Naive thymus-derived CD4-positive, alpha-beta T cell (primary cell): ENCODE measurements at regions of chr12 and their contacts with region 1.

Region 1: GRCh38 chr12:109880016-109880931 is at the start of gene GLTP:
- DNase-seq: peak; percentile 82 to 96 (median 94)
- ATAC-seq: peak; percentile 98
- H3K4me3 ChIP-seq: peak within 1 kb of the TSS; percentile 92
- H3K4me3 Mint-ChIP-seq: peak within 1 kb of the TSS; percentile 84 to 97 (median 94)
- H3K27ac ChIP-seq: peak within 1 kb of the TSS; percentile 88
- H3K27ac Mint-ChIP-seq: peak within 1 kb of the TSS; percentile 77 to 97 (median 90)
- H3K4me1 ChIP-seq: peaks cover 24 to 25% of the 10 kb centered on the region in 2 donors
- H3K4me1 Mint-ChIP-seq: peaks cover 27 to 54% (median 50%) of the 10 kb centered on the region in 7 donors
- H3K27me3 ChIP-seq: no peaks in the 10 kb centered on the region
- H3K27me3 Mint-ChIP-seq: peaks cover 0 to 15% (median 0%) of the 10 kb centered on the region in 5 donors
- total RNA-seq, gene GLTP: 19.2 to 36.2 (median 22.1) TPM

Region 2: DNA sequence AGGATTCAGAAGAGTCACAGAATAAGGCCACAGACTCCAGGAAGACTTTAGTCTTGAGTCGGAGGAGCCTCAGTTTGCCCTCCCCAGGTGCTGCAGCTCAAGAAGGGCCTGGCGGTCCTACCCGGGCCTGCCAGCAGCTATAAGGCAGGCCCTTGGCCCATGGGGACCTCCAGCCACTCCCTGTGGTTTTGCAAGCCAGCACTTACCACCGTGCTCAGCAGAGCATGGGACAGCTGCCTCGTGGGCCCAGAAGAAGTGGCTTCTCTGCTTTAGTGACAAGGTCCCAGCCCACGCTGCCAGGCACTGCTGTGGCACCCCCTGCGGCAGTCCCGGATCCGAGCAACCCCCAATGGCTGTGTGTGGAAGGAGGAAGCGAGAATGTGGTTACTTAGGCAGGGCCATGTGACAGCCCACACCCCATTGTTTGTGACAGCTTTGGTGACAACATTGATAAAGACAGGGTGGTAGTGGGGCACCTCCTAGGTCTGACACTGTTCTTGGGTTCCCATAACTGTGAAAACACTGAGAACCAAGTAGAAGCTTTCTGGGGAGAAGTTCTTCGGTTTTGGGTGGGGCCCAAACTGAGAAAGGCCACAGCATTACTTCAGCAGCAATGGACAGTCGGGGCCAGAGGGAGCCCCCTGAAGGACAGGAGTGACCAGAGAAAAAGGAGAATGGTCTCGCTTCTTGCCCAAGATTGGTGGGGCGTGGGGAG is 1246.6 kb before region 1 on chr12 and contains the start of gene SELPLG:
- CTCF ChIA-PET with region 1: no interaction called
- POLR2A ChIA-PET with region 1: no interaction called
- intact Hi-C with region 1: loop called in 1 of 2 experiments (anchors 10 kb)
- DNase-seq: peak; percentile 70 to 96 (median 93)
- ATAC-seq: peak; percentile 83
- H3K4me3 ChIP-seq: peak within 1 kb of the TSS; percentile 98
- H3K4me3 Mint-ChIP-seq: peak within 1 kb of the TSS; percentile 90 to 100 (median 99)
- H3K27ac ChIP-seq: peak within 1 kb of the TSS; percentile 89
- H3K27ac Mint-ChIP-seq: peak within 1 kb of the TSS; percentile 95 to 100 (median 98)
- H3K4me1 ChIP-seq: peaks cover 50 to 53% of the 10 kb centered on the region in 2 donors
- H3K4me1 Mint-ChIP-seq: peaks cover 50 to 73% (median 66%) of the 10 kb centered on the region in 7 donors
- H3K27me3 ChIP-seq: no peaks in the 10 kb centered on the region
- H3K27me3 Mint-ChIP-seq: no peaks in the 10 kb centered on the region
- total RNA-seq, gene SELPLG: 54.3 to 217 (median 154) TPM

Region 3: DNA sequence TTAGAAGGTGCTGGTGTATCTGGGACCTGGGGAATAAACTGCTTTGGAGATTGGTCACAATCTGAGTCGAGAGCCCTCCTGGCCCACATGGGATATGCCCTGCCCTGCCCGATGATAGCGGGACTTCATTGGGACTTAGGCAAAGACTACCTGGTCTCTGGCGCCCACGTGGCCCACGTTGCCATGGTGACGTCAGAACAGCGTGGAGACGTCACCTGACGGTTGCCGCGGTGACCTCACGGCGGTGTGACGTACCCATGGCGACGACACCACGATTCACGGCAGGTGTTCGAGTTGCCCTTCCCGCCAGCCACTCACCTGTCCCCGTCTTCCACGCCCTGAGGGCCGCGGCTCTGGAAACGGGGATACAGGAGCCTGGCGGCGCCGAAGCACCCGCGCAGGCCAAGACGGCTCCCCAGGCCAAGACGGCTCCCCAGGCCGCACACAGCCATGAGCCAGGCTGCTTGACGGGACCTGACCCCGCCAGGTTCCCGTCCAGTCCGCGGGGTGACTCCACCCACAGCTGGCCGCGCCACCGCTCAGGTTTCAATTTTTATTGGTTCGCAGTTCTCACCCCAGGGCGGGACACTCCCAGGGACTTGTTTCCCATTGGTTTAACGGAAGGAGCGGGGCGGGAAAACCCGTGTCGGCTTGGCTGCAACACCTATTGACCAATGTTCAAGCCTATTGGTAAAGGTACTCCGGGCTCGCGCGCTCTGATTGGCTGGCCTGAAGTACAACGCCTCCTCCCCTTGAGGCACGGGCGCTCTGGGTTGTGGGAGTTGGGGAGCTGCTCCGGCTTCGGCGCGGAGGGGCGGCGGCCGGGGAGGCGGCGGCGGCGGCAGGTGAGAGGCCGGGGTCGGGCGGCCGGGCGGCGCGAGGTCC is 307.0 kb before region 1 on chr12 and contains the starts of genes MMAB and MVK:
- CTCF ChIA-PET with region 1: no interaction called
- POLR2A ChIA-PET with region 1: no interaction called
- intact Hi-C with region 1: loop called (anchors 1 kb)
- DNase-seq: peak; percentile 87 to 99 (median 99)
- ATAC-seq: peak; percentile 97
- H3K4me3 ChIP-seq: peak within 1 kb of the TSS; percentile 75
- H3K4me3 Mint-ChIP-seq: peak within 1 kb of the TSS; percentile 90 to 97 (median 94)
- H3K27ac ChIP-seq: peak within 1 kb of the TSS; percentile 95
- H3K27ac Mint-ChIP-seq: peak within 1 kb of the TSS; percentile 87 to 100 (median 95)
- H3K4me1 ChIP-seq: peaks cover 13 to 16% of the 10 kb centered on the region in 2 donors
- H3K4me1 Mint-ChIP-seq: peaks cover 9 to 39% (median 36%) of the 10 kb centered on the region in 7 donors
- H3K27me3 ChIP-seq: no peaks in the 10 kb centered on the region
- H3K27me3 Mint-ChIP-seq: no peaks in the 10 kb centered on the region
- total RNA-seq, gene MMAB: 13.5 to 24.7 (median 20.1) TPM
- total RNA-seq, gene MVK: 10.0 to 14.8 (median 11.7) TPM

Region 4: DNA sequence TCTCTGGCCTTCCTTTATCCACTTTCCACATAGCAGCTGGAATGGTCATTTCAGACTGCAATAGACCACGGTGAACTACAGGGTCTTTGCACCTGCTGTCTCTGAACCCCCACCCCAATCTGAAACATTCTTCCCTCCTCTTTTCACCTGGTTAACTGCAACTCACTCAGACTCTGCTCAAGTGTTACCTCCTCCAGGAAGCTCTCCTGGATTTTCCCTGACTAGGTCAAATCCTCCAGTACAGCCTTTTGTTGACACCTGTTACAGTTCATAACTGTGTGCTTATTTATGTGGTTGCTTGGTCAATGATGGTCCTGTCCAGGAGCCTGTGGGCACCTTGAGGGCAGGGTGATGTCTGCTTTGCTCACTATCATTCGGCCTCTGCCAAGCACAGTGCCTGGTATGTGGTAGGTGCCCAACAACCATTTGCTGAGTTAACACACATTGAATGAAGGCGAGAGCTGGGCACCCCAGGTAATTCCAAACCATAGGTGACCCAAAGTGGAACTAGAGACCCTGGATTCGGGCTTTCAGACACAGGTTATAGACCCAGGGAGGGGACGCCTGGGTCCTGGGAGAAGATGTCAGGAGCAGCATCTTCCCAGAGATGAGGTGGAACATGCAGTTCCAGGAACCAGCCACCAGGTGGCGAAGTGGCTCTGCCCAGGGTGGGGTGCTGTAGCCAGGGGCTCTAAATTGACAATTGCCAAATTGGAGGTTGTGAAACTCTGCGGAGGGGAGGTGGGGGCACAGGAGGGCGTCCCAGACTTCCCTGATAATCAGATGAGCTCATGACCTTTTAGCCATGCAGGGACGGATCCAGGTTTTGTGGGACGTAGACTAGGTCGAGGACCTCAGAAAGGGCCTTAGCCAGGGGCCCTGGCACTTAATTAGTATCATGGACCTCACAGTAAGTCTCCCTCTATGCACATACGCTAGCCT is 75.2 kb before region 1 on chr12:
- CTCF ChIA-PET with region 1: interaction called, 9 read pairs
- POLR2A ChIA-PET with region 1: interaction called, 5 read pairs
- intact Hi-C with region 1: loop called (anchors 1 kb)
- DNase-seq: peak; percentile 44 to 73 (median 55)
- ATAC-seq: peak; percentile 90
- H3K4me3 ChIP-seq: no peak overlapping the region
- H3K4me3 Mint-ChIP-seq: no peak overlapping the region
- H3K27ac ChIP-seq: no peak overlapping the region
- H3K27ac Mint-ChIP-seq: peak overlapping the region in 2 of 9 donors; percentile 58 to 74
- H3K4me1 ChIP-seq: no peaks in the 10 kb centered on the region
- H3K4me1 Mint-ChIP-seq: peaks cover 0 to 2% (median 0%) of the 10 kb centered on the region in 7 donors
- H3K27me3 ChIP-seq: no peaks in the 10 kb centered on the region
- H3K27me3 Mint-ChIP-seq: peaks cover 0 to 4% (median 0%) of the 10 kb centered on the region in 5 donors

Region 5: DNA sequence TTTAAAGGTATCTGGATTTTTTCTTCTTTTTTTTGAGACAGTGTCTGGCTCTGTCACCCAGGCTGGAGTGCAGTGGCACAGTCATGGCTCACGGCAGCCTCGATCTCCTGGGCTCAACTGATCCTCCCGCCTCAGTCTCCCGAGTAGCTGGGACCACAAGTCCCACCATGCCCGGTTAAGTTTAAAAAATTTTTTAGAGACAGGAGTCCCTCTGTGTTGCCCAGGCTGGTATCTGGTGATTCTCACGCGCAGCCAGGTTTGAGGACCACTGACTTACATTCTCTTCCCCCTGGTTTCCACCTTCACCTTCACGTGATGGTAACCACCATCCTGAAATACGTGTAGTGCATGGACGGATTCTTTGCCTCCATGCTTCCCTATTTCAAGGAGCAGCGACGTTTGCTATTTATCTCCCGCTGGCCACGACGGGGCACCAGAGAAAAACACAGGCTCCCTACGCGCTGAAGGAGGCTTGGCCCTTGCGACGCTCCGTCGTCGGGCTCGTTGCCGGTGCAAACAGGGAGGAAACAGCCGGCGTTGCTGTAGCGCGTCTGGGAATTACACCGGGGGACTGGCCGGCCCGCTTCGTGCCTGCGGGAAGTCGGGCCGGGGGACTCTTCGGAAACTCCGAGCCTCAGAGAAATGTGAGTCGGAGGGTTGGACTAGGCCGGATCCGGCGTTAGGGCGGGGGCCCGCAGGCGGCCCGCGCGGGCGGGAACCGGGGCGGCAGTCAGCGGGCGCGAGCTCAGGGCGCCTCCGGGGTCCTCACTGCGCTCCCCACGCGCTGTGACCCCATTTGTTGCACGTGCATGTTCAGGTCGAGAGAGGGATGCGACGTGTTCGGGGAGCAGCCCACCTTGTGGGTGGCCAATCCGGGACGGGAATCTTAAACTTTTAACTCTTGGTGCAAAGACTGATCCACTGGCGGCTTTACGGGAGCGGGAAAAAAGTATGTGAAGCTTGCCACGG is 19.8 kb after region 1 on chr12 and contains the start of gene TCHP:
- CTCF ChIA-PET with region 1: interaction called, 6 read pairs
- POLR2A ChIA-PET with region 1: interaction called, 5 read pairs
- intact Hi-C with region 1: loop called (anchors 1 to 2 kb)
- DNase-seq: peak; percentile 58 to 79 (median 75)
- ATAC-seq: peak; percentile 97
- H3K4me3 ChIP-seq: peak within 1 kb of the TSS; percentile 90
- H3K4me3 Mint-ChIP-seq: peak within 1 kb of the TSS; percentile 88 to 98 (median 93)
- H3K27ac ChIP-seq: peak within 1 kb of the TSS; percentile 74
- H3K27ac Mint-ChIP-seq: peak within 1 kb of the TSS; percentile 88 to 99 (median 93)
- H3K4me1 ChIP-seq: peaks cover 15 to 17% of the 10 kb centered on the region in 2 donors
- H3K4me1 Mint-ChIP-seq: peaks cover 17 to 33% (median 22%) of the 10 kb centered on the region in 7 donors
- H3K27me3 ChIP-seq: no peaks in the 10 kb centered on the region
- H3K27me3 Mint-ChIP-seq: no peaks in the 10 kb centered on the region
- total RNA-seq, gene TCHP: 21.7 to 40.0 (median 31.8) TPM

Region 6: GRCh38 chr12:110015132-110015531 is 134.9 kb after region 1 on chr12:
- CTCF ChIA-PET with region 1: no interaction called
- POLR2A ChIA-PET with region 1: no interaction called
- intact Hi-C with region 1: loop called in 1 of 2 experiments (anchors 1 kb)
- DNase-seq: peak in 5 of 9 donors; percentile 20 to 53 (median 40)
- ATAC-seq: peak; percentile 66
- H3K4me3 ChIP-seq: no peak overlapping the region
- H3K4me3 Mint-ChIP-seq: peak overlapping the region in 7 of 10 donors; percentile 8 to 64 (median 55)
- H3K27ac ChIP-seq: peak overlapping the region; percentile 61
- H3K27ac Mint-ChIP-seq: peak overlapping the region; percentile 75 to 93 (median 85)
- H3K4me1 ChIP-seq: peaks cover 12 to 19% of the 10 kb centered on the region in 2 donors
- H3K4me1 Mint-ChIP-seq: peaks cover 15 to 42% (median 30%) of the 10 kb centered on the region in 7 donors
- H3K27me3 ChIP-seq: no peaks in the 10 kb centered on the region
- H3K27me3 Mint-ChIP-seq: no peaks in the 10 kb centered on the region

Region 7: GRCh38 chr12:110280779-110281548 is 400.7 kb after region 1 on chr12 and contains the start of gene ATP2A2:
- CTCF ChIA-PET with region 1: no interaction called
- POLR2A ChIA-PET with region 1: no interaction called
- intact Hi-C with region 1: loop called in 1 of 2 experiments (anchors 10 kb)
- DNase-seq: peak; percentile 87 to 93 (median 91)
- ATAC-seq: peak; percentile 96
- H3K4me3 ChIP-seq: peak within 1 kb of the TSS; percentile 83
- H3K4me3 Mint-ChIP-seq: peak within 1 kb of the TSS; percentile 87 to 96 (median 93)
- H3K27ac ChIP-seq: peak within 1 kb of the TSS; percentile 92
- H3K27ac Mint-ChIP-seq: peak within 1 kb of the TSS; percentile 84 to 93 (median 89)
- H3K4me1 ChIP-seq: peaks cover 12 to 27% of the 10 kb centered on the region in 2 donors
- H3K4me1 Mint-ChIP-seq: peaks cover 39 to 50% (median 48%) of the 10 kb centered on the region in 7 donors
- H3K27me3 ChIP-seq: no peaks in the 10 kb centered on the region
- H3K27me3 Mint-ChIP-seq: peaks cover 0 to 11% (median 0%) of the 10 kb centered on the region in 5 donors
- total RNA-seq, gene ATP2A2: 81.4 to 160 (median 83.9) TPM